AG04450 (cell line): ENCODE measurements at regions of chr9 and their contacts with region 1.

Region 1: DNA sequence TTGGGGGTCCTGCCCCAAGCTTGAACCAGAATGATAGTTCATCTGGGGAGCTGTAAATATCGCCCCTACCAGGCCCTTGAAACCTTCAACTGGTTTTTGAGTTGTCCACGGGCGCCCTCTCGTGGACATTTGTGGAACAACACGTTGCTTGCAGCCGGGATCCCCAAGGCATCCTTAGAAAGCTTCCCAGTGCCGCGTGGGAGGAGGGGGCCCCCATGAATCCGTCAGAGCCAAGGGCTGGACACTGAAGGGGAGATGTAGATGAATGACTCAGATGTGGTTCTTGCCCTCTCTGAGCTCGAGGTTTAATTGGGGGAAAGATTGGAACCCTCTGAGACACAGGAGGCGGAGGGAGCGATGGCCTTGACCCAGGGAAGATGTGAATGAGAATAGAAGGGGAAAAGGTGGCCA is 31.8 kb upstream of the ORM1 start:
- DNase-seq: no peak
- H3K4me3 ChIP-seq: no peak overlapping the region
- H3K27ac ChIP-seq: no peak overlapping the region
- H3K27me3 ChIP-seq: no peaks in the 10 kb centered on the region
- CTCF ChIP-seq: peak; percentile 83

Region 2: GRCh38 chr9:113340017-113340699 is 950.9 kb before region 1 on chr9 and contains the start of gene WDR31:
- CTCF ChIA-PET with region 1: interaction called, 10 read pairs
- POLR2A ChIA-PET with region 1: no interaction called
- DNase-seq: peak; percentile 74
- H3K4me3 ChIP-seq: peak within 1 kb of the TSS; percentile 89
- H3K27ac ChIP-seq: peak within 1 kb of the TSS; percentile 34
- H3K27me3 ChIP-seq: no peaks in the 10 kb centered on the region
- CTCF ChIP-seq: no peak
- polyA plus RNA-seq, gene WDR31: 0.97 and 1.5 TPM in 2 replicates

Region 3: DNA sequence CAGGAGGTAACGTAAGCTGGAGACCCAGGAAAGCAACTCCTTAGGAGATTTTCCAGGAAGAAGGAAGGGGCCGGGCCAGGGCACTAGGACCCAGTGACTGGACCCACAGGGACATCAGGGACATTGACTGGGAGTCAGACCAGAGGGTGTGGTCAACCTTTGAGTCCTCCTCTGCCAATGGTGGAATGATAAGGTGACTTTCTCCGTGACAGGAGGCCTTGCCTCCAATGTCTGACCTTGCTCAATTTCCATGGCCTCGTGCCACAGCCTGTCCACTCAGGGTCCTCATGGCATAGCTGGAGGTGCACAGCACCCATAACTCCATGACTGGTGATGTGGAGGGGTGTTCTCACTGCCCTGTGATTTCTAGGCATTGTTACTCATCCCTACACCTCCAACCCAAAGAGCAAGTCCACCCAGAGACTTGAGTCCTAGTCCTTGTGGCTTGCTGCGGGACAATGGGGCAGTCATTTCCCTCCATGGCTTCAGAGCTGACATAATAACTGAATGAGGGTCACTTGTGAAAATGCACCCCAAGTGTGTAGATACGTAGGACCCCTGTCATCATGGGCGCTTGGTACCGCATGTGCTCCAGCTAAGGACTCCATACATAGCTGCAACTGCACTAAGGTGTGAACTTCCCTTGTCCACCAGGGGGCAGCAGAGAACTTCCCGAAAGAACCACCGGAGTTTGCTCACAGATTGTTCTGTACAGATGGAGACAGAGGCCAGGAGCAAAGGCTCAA is 208.9 kb before region 1 on chr9:
- CTCF ChIA-PET with region 1: interaction called, 162 read pairs
- POLR2A ChIA-PET with region 1: no interaction called
- DNase-seq: peak; percentile 74
- H3K4me3 ChIP-seq: no peak overlapping the region
- H3K27ac ChIP-seq: no peak overlapping the region
- H3K27me3 ChIP-seq: peaks cover 14% of the 10 kb centered on the region
- CTCF ChIP-seq: peak; percentile 93

Region 4: GRCh38 chr9:114108016-114108833 is 182.8 kb before region 1 on chr9:
- CTCF ChIA-PET with region 1: interaction called, 348 read pairs
- POLR2A ChIA-PET with region 1: no interaction called
- DNase-seq: peak; percentile 57
- H3K4me3 ChIP-seq: no peak overlapping the region
- H3K27ac ChIP-seq: no peak overlapping the region
- H3K27me3 ChIP-seq: peaks cover 19% of the 10 kb centered on the region
- CTCF ChIP-seq: peak; percentile 100

Region 5: GRCh38 chr9:114141553-114142402 is 149.3 kb before region 1 on chr9:
- CTCF ChIA-PET with region 1: interaction called, 21 read pairs
- POLR2A ChIA-PET with region 1: no interaction called
- DNase-seq: no peak
- H3K4me3 ChIP-seq: no peak overlapping the region
- H3K27ac ChIP-seq: peak overlapping the region; percentile 11
- H3K27me3 ChIP-seq: peaks cover 73% of the 10 kb centered on the region
- CTCF ChIP-seq: no peak

Region 6: DNA sequence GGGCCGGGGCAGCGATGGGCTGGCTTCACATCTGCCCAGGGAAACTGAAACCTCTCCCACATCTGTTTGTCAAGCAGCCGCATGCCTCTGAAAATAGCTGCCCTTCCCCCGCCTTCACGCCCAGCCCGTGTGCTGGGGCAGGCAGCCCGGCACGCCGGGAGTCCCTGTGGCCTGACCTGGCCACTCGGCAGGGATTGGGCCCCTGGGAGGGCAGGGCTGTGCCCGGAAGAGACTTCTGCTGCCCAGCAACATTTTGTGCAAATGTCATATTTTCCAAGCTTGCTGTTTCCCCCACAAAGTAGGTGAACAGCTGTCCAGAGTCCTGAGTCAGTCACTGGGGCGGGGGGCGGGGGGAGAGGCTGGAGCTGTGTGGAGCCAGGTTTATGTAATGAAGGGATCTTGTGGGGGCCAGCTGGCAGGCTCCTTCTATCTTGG is 127.5 kb before region 1 on chr9:
- CTCF ChIA-PET with region 1: interaction called, 13 read pairs
- POLR2A ChIA-PET with region 1: no interaction called
- DNase-seq: no peak
- H3K4me3 ChIP-seq: peak overlapping the region; percentile 34
- H3K27ac ChIP-seq: peak overlapping the region; percentile 52
- H3K27me3 ChIP-seq: no peaks in the 10 kb centered on the region
- CTCF ChIP-seq: no peak

Region 7: GRCh38 chr9:114351932-114352331 is 60.9 kb after region 1 on chr9:
- CTCF ChIA-PET with region 1: no interaction called
- POLR2A ChIA-PET with region 1: no interaction called
- DNase-seq: no peak
- H3K4me3 ChIP-seq: no peak overlapping the region
- H3K27ac ChIP-seq: no peak overlapping the region
- H3K27me3 ChIP-seq: no peaks in the 10 kb centered on the region
- CTCF ChIP-seq: no peak